Cardiac septum (tissue), 1 donor: ENCODE measurements at regions of chr11 and their contacts with region 1.

Region 1: DNA sequence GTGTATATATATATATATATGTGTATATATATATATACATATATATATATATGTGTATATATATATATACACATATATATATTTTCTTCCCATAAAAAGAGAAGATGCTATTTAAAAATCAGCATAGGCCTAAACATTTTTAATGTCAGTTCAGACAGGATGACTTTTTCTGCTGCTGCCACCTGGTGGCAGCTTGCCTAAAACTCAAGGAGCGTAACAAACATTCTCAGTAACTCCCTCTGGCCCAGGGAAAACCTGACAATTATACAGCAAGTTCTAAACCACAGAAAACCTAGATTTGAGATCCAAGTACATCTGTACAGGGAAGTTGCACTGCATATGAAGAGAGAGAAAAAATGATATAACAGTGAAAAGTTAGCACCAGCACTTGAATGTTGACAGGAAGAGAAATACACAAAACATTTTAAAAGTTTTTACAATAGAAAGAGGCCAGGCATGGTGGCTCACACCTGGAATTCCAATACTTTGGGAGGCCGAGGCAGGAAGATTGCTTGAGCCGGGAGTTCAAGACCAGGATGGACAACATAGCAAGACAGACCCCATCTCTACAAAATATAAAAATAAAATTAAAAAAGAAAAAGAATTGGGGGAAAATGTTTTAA is 16.6 kb downstream of the OR8A1 start:
- DNase-seq: no peak

Region 2: GRCh38 chr11:124070915-124071635 is 515.3 kb before region 1 on chr11:
- intact Hi-C with region 1: loop called (anchors 5 kb)
- DNase-seq: no peak

Region 3: GRCh38 chr11:124415356-124415923 is 170.9 kb before region 1 on chr11:
- intact Hi-C with region 1: loop called (anchors 2 kb)
- DNase-seq: no peak

Region 4: DNA sequence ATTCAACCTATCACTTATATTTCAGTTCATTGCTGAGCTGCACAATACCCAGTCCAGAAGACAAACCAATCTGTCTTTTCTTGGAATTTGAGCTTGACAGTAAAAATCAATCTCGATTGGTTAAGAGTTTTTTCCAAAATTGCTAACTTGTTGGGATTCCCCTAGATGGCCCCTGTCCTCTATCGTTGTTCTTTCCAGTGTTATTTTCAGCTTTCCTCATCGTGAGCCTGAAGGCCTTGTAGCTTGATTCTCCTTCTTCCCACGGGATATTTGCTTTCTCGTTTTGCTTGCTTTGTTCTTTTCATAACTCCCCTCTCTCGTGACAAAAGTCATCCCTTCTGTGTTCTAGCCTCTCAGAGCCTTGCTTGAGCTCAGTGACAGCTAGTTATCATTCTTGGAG is 143.9 kb before region 1 on chr11:
- intact Hi-C with region 1: loop called (anchors 10 kb)
- DNase-seq: no peak